K562 (cell line): ENCODE measurements at regions of chr13 and their contacts with region 1.

Region 1: GRCh38 chr13:91767651-91768050 is 369.2 kb downstream of the GPC5 start:
- DNase-seq: no peak
- ATAC-seq: no peak
- H3K4me3 ChIP-seq: no peak overlapping the region
- H3K27ac ChIP-seq: no peak overlapping the region
- H3K4me1 ChIP-seq: no peaks in the 10 kb centered on the region
- H3K27me3 ChIP-seq: no peaks in the 10 kb centered on the region
- CTCF ChIP-seq: no peak
- EP300 ChIP-seq: no peak
- POLR2A ChIP-seq: no peak
- RAD21 ChIP-seq: no peak

Region 2: DNA sequence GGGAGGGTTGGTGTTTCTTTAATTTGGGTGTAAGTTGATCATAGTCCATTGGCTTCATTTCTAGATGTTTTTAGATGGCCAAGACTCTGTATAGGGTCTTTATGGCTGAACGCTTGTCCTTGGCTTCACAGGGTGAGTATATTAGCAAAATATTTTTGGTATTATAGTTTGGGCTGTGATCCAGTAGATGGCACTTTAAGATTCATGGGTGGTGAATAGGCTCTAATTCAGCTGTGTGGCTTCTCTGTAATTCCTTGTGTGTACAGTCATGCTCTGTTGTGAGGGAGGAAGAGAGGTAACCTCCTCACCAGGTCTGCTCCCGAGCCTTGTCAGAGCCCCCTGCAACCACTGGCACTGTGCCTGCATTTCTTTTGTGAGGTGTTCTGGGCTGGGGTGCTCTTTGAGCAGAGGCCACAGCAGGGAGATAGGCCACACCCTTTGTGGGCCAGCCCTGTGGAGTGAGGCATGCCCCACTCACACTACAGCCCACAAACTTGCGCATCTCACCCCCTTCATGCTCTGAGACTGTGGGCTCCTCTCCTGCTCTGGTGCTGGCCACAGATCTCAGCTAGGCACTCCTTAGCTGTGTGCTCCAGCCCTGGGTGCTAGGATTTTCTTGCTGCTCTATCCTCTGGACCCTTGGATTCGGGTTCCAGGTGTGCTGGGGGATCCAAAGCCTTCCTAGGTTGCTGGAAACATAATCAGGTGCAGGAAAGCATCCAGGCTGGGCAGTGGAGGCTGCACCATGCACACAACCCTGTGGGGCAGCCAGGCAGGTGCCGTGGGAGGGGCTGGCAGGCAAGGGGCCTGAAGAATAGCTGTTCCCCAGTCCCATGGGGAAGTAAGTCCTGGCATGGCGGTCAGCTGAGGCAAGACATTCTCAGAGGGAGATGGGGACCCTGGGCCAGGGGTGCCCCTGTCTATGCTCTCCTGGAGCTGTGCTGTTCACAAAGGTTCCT is 175.3 kb before region 1 on chr13:
- CTCF ChIA-PET with region 1: no interaction called
- POLR2A ChIA-PET with region 1: no interaction called
- in situ Hi-C with region 1: no loop called
- intact Hi-C with region 1: loop called (anchors 5 kb)
- DNase-seq: no peak
- ATAC-seq: peak; percentile 43
- H3K4me3 ChIP-seq: no peak overlapping the region
- H3K27ac ChIP-seq: no peak overlapping the region
- H3K4me1 ChIP-seq: no peaks in the 10 kb centered on the region
- H3K27me3 ChIP-seq: no peaks in the 10 kb centered on the region
- CTCF ChIP-seq: no peak; a peak in 1 of 6 replicates
- EP300 ChIP-seq: no peak
- POLR2A ChIP-seq: no peak
- RAD21 ChIP-seq: no peak

Region 3: GRCh38 chr13:91709180-91709579 is 58.5 kb before region 1 on chr13:
- CTCF ChIA-PET with region 1: no interaction called
- POLR2A ChIA-PET with region 1: no interaction called
- in situ Hi-C with region 1: no loop called
- intact Hi-C with region 1: loop called (anchors 5 kb)
- DNase-seq: no peak
- ATAC-seq: no peak
- H3K4me3 ChIP-seq: no peak overlapping the region
- H3K27ac ChIP-seq: no peak overlapping the region
- H3K4me1 ChIP-seq: no peaks in the 10 kb centered on the region
- H3K27me3 ChIP-seq: no peaks in the 10 kb centered on the region
- CTCF ChIP-seq: no peak
- EP300 ChIP-seq: no peak
- POLR2A ChIP-seq: no peak
- RAD21 ChIP-seq: no peak

Region 4: GRCh38 chr13:91805605-91806004 is 38.0 kb after region 1 on chr13:
- CTCF ChIA-PET with region 1: no interaction called
- POLR2A ChIA-PET with region 1: no interaction called
- in situ Hi-C with region 1: no loop called
- intact Hi-C with region 1: no loop called
- DNase-seq: no peak
- ATAC-seq: 0 out of 3 replicates have a peak, but pooled peaks have one; percentile 32
- H3K4me3 ChIP-seq: no peak overlapping the region
- H3K27ac ChIP-seq: no peak overlapping the region
- H3K4me1 ChIP-seq: no peaks in the 10 kb centered on the region
- H3K27me3 ChIP-seq: no peaks in the 10 kb centered on the region
- CTCF ChIP-seq: peak in 1 of 3 experiments; percentile 23; a peak in 1 of 6 replicates
- EP300 ChIP-seq: no peak
- POLR2A ChIP-seq: no peak
- RAD21 ChIP-seq: peak in 1 of 2 experiments; percentile 16; a peak in 2 of 4 replicates